ENCODE measurements at regions of chr11 and their contacts with region 1.

Region 1: DNA sequence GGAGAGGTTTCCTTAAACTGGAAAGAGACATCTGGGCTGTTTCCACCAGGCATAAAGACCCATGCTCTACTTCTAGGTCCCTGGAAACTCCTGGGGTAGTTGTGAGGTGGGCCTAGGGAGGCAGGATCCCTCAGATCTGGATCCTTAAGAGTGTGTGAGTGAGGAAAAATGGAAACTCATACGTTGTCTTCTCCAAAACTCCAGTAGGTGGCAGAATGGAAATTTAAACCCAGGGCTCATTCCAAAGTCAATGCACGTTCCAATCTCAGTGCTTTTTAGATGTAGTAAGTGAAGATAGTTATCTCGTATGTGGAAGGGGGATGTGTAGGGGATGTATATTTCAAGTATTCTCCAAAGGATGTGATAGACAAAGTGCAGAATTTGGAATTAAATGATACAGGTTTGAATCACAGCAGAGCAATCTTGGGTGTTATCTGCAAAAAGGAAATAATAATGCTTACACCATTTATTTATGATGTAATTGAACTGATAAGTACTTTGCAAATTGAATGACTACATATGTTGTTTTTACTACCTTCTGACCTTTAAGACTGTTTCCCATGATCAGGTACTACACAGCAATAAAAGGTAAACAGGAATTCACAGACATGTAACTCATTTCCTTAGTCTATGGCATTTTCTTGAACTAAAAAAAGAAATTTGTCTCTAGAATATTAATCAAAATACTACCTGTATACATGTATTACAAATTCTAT is 13.1 kb upstream of the MMP1 start:
- DNase-seq: no peak
- H3K4me3 Mint-ChIP-seq: no peak overlapping the region
- H3K27ac Mint-ChIP-seq: no peak overlapping the region
- H3K4me1 Mint-ChIP-seq: peaks cover 9% of the 10 kb centered on the region
- H3K27me3 Mint-ChIP-seq: peaks cover 7% of the 10 kb centered on the region
- CTCF ChIP-seq: peak; percentile 36

Region 2: GRCh38 chr11:102733232-102733875 is 77.7 kb before region 1 on chr11:
- CTCF ChIA-PET with region 1: no interaction called
- intact Hi-C with region 1: loop called (anchors 5 kb)
- DNase-seq: peak; percentile 74
- H3K4me3 Mint-ChIP-seq: no peak overlapping the region
- H3K27ac Mint-ChIP-seq: no peak overlapping the region
- H3K4me1 Mint-ChIP-seq: no peaks in the 10 kb centered on the region
- H3K27me3 Mint-ChIP-seq: no peaks in the 10 kb centered on the region
- CTCF ChIP-seq: peak; percentile 64

Region 3: DNA sequence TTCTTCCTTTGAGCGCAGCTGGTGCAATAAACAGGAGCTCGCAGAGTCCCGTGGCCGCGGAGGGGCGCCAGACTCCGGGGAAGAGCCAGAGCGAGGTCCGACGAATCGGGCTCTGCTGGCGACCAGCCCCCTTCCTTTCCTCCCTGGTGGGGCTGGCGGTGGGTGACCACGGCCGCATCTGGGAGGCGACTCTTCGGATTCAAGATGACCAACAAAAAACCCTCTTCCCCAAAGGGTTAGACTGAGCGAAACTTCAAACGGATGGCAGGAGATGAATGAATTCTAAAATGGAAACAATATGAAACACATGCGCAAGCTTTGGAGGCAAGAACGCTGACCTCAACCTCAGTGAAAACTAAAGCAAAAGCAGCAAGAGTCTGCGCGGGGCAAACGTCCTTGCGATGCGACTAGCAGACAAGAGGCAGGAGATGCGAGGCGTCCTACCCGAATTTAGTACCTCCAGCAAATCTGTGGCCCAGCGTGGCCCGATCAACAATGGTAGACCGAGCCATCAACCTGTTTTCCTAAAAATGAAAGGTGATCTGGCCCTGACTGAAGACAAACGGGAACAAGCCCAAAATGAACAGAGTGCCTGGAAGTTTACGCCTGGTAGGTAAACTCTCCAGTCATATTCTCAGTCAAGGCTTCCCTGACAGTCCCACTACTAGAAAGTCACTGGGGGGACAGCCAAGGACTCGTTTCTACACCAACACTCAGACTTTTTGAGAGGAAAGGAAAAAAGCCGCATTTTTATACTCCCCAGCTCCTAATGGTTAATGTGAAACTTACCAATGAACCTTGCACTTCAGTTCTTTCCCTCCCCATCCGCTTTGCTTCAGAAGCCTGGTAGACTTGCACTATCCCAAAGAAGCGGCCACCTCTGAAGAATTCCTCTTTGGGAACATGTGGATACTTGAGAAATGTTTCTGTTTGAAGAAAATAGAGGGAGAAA is 20.7 kb after region 1 on chr11:
- CTCF ChIA-PET with region 1: no interaction called
- intact Hi-C with region 1: loop called (anchors 2 kb)
- DNase-seq: peak; percentile 79
- H3K4me3 Mint-ChIP-seq: peak overlapping the region; percentile 72
- H3K27ac Mint-ChIP-seq: no peak overlapping the region
- H3K4me1 Mint-ChIP-seq: peaks cover 34% of the 10 kb centered on the region
- H3K27me3 Mint-ChIP-seq: peaks cover 12% of the 10 kb centered on the region
- CTCF ChIP-seq: peak; percentile 57

Region 4: DNA sequence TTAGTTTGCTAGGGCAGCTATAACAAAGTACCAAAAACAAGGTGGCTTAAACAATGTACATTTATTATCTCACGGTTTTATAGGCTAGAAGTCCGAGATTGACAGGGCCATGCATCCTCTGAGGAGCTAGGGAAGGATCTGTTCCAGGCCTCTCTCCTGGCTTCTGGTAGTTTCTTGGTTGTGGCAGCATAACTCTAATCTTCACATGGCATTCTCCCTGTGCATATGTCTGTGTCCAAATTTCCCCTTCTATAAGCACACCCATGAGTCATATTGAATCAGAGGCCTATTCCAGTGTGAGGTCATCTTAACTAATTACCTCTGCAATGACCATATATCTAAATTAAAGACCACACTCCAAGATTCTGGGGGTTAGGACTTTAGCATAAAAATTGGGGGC is 175.7 kb after region 1 on chr11:
- CTCF ChIA-PET with region 1: no interaction called
- intact Hi-C with region 1: no loop called
- DNase-seq: no peak
- H3K4me3 Mint-ChIP-seq: no peak overlapping the region
- H3K27ac Mint-ChIP-seq: no peak overlapping the region
- H3K4me1 Mint-ChIP-seq: no peaks in the 10 kb centered on the region
- H3K27me3 Mint-ChIP-seq: no peaks in the 10 kb centered on the region
- CTCF ChIP-seq: no peak

Measured in Calu3 (cell line).